ENCODE measurements at regions of chr12 and their contacts with region 1.

Region 1: GRCh38 chr12:87866578-87867292 is 162.5 kb downstream of the C12orf50 start:
- DNase-seq: peak; percentile 12
- ATAC-seq: peak; percentile 91
- H3K4me3 ChIP-seq: no peak overlapping the region
- H3K27ac ChIP-seq: no peak overlapping the region
- H3K4me1 ChIP-seq: no peaks in the 10 kb centered on the region
- H3K27me3 ChIP-seq: no peaks in the 10 kb centered on the region
- CTCF ChIP-seq: peak; percentile 32 to 74 (median 66); a peak in 5 of 6 replicates
- POLR2A ChIP-seq: no peak
- RAD21 ChIP-seq: peak; percentile 51; the same call in 1 of the 2 replicates

Region 2: DNA sequence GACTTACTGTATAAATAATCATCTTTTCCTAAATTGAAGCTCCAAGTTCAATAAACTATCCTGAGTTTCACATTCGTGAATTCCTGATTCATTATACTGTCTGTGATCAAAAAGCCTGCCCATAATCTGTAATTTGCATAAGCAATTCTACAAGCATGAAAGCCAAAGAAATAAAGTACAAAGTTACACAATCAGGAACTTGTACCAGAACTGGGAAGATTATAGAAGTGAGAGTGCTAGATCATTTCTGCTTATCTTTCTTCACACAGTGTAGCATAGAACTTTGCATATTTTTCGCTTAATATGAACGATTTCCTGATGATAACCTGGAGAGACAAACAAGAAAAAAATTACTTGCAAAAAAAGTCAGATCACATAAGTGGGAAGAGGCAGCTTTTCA is 145.8 kb before region 1 on chr12:
- CTCF ChIA-PET with region 1: no interaction called
- POLR2A ChIA-PET with region 1: no interaction called
- RAD21 ChIA-PET with region 1: no interaction called
- intact Hi-C with region 1: no loop called
- DNase-seq: no peak
- ATAC-seq: no peak
- H3K4me3 ChIP-seq: no peak overlapping the region
- H3K27ac ChIP-seq: no peak overlapping the region
- H3K4me1 ChIP-seq: no peaks in the 10 kb centered on the region
- H3K27me3 ChIP-seq: no peaks in the 10 kb centered on the region
- CTCF ChIP-seq: no peak
- POLR2A ChIP-seq: no peak
- RAD21 ChIP-seq: no peak

Region 3: GRCh38 chr12:87988534-87988933 is 121.8 kb after region 1 on chr12:
- CTCF ChIA-PET with region 1: no interaction called
- POLR2A ChIA-PET with region 1: no interaction called
- RAD21 ChIA-PET with region 1: no interaction called
- intact Hi-C with region 1: no loop called
- DNase-seq: no peak
- ATAC-seq: no peak
- H3K4me3 ChIP-seq: no peak overlapping the region
- H3K27ac ChIP-seq: no peak overlapping the region
- H3K4me1 ChIP-seq: no peaks in the 10 kb centered on the region
- H3K27me3 ChIP-seq: no peaks in the 10 kb centered on the region
- CTCF ChIP-seq: no peak
- POLR2A ChIP-seq: no peak
- RAD21 ChIP-seq: no peak

Region 4: DNA sequence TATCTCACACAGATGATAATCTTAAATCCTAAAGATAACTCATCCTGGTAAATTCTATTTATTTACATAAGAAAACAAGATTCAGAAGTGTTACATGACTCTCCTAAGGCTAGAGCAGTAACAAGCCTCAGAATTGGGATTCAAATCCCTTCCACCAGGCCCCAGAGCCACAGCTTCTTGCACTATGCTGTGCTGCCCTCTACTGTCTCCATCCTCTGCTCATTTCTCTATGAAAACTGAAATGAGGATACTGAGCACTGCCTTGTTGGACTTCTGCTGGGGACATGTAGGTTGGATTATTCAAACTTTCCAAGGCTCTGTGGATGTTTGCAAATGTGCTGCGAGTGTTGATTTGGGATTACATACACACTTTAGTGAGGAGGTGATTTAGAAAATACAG is 186.0 kb after region 1 on chr12:
- CTCF ChIA-PET with region 1: no interaction called
- POLR2A ChIA-PET with region 1: no interaction called
- RAD21 ChIA-PET with region 1: no interaction called
- intact Hi-C with region 1: loop called (anchors 5 kb)
- DNase-seq: peak; percentile 27
- ATAC-seq: peak; percentile 93
- H3K4me3 ChIP-seq: no peak overlapping the region
- H3K27ac ChIP-seq: no peak overlapping the region
- H3K4me1 ChIP-seq: no peaks in the 10 kb centered on the region
- H3K27me3 ChIP-seq: no peaks in the 10 kb centered on the region
- CTCF ChIP-seq: peak; percentile 29 to 71 (median 65); a peak in 5 of 6 replicates
- POLR2A ChIP-seq: no peak
- RAD21 ChIP-seq: peak; percentile 73